ENCODE measurements at regions of chr21 and their contacts with region 1.

Region 1: GRCh38 chr21:45130324-45130774 is 56.0 kb downstream of the ADARB1 start:
- DNase-seq: no peak
- H3K4me3 Mint-ChIP-seq: no peak overlapping the region
- H3K27ac Mint-ChIP-seq: no peak overlapping the region
- H3K4me1 Mint-ChIP-seq: peaks cover 23% of the 10 kb centered on the region
- H3K27me3 Mint-ChIP-seq: no peaks in the 10 kb centered on the region

Region 2: DNA sequence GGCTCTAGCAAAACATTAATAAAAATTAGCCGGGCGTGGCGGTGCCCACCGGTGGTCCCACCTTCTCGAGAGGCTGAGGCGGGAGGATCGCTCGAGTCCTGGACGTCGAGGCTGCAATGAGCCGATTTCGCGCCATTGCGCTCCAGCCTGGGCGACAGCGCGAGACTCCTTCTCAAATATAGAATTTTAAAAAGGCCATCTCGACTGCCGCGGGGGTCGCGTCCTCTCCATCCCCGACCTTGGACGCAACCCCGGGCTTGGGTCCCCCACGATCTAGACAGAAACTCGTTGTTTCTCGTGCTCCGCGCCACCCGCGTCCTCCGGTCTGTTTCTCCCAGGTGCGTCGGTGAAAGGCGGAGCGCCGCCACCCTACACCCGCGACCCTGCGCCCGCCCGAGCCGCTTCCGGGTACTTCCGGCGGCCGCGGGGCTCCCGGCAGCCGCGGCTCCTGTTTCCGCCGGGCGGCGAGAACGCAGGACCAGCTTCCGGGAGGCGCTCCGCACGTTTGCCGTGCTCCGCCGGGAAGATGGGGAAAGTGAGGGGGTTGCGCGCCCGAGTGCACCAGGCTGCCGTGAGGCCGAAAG is 190.7 kb before region 1 on chr21 and contains the start of gene SLX9:
- CTCF ChIA-PET with region 1: interaction called, 256 read pairs
- POLR2A ChIA-PET with region 1: no interaction called
- intact Hi-C with region 1: no loop called
- DNase-seq: peak; percentile 88
- H3K4me3 Mint-ChIP-seq: peak within 1 kb of the TSS; percentile 82
- H3K27ac Mint-ChIP-seq: peak within 1 kb of the TSS; percentile 79
- H3K4me1 Mint-ChIP-seq: peaks cover 36% of the 10 kb centered on the region
- H3K27me3 Mint-ChIP-seq: no peaks in the 10 kb centered on the region
- total RNA-seq, gene SLX9: 60.7 to 64.6 TPM

Region 3: DNA sequence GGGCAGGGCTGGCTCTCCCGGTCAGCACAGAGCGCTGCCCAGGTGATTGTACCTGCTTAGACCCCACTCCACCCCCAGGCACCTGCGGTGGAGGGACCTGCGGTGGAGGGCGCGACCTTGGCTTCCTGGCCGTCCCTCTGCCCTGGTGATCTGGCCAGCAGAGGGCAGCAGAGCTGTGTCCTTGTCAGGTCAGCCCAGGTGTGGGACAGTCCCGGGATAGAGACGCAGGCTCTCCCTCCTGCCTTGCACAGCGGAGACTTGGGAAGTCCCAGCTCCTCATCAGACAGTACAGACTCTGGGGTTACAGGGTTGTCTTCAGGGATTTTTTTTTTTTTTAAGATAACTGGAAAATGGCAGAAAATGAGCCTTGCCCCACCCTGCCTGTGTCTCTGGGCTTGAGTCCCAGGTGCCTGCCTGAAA is 180.6 kb before region 1 on chr21:
- CTCF ChIA-PET with region 1: interaction called, 256 read pairs
- POLR2A ChIA-PET with region 1: no interaction called
- intact Hi-C with region 1: loop called (anchors 1 kb)
- DNase-seq: peak; percentile 87
- H3K4me3 Mint-ChIP-seq: no peak overlapping the region
- H3K27ac Mint-ChIP-seq: no peak overlapping the region
- H3K4me1 Mint-ChIP-seq: peaks cover 6% of the 10 kb centered on the region
- H3K27me3 Mint-ChIP-seq: no peaks in the 10 kb centered on the region

Region 4: DNA sequence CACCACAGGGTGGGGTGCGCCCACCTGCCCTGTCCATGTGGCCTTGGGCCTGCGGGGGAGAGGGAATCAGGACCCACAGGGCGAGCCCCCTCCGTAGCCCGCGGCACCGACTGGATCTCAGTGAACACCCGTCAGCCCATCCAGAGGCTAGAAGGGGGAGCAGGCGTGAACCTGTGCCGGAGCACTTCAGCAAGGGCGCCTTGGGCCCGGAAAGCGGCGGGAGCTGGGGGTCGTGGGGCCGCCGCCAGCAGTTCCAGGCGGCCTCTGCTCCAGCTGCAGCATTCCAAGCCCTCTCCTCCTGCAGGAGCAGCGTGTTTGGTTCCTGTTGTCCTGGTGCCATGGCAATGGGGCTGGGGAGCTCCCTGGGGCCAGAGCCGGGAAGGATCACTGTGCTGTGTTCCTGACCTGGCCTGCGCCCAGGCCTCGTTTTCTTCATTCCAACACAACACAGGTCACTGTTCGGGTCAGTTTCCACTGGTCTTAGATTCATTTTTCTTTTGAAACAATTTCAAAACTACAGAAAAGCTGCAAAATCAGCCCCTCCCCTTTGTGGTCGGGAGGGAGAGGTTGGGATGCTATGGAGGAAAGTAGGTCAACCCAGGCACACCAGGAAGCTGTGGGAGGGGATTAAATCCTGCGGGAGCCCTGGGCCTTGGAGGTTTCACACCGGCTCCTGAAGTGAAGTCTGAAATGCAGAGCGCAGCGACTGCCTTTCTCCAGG is 171.7 kb before region 1 on chr21:
- CTCF ChIA-PET with region 1: interaction called, 256 read pairs
- POLR2A ChIA-PET with region 1: no interaction called
- intact Hi-C with region 1: no loop called
- DNase-seq: no peak
- H3K4me3 Mint-ChIP-seq: no peak overlapping the region
- H3K27ac Mint-ChIP-seq: no peak overlapping the region
- H3K4me1 Mint-ChIP-seq: no peaks in the 10 kb centered on the region
- H3K27me3 Mint-ChIP-seq: no peaks in the 10 kb centered on the region

Region 5: GRCh38 chr21:45074048-45074817 is 56.1 kb before region 1 on chr21 and contains the start of gene ADARB1:
- CTCF ChIA-PET with region 1: interaction called, 73 read pairs
- POLR2A ChIA-PET with region 1: no interaction called
- intact Hi-C with region 1: loop called (anchors 5 kb)
- DNase-seq: peak; percentile 64
- H3K4me3 Mint-ChIP-seq: peak within 1 kb of the TSS; percentile 84
- H3K27ac Mint-ChIP-seq: peak within 1 kb of the TSS; percentile 75
- H3K4me1 Mint-ChIP-seq: peaks cover 43% of the 10 kb centered on the region
- H3K27me3 Mint-ChIP-seq: no peaks in the 10 kb centered on the region
- total RNA-seq, gene ADARB1: 37.6 to 40.6 TPM

Region 6: DNA sequence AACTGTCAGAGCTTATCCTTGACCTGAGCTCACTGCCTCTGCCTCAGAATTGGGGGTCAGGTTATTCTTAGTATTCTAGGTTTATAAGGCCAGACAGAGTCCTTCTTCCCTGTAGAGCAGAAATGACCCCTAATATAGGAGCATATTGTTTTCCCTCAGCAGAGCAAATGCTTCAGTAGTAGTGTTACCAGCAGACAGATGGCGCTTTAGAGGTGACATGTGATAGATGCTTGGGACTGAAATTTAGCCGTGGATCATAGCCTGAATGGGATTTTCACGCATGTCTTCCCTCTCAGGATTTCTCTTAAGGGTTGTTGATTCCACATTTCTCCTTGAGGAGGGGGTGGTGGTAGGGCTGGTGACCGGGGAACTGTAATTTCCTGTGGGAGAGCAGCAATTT is 31.5 kb before region 1 on chr21:
- CTCF ChIA-PET with region 1: interaction called, 40 read pairs
- POLR2A ChIA-PET with region 1: no interaction called
- intact Hi-C with region 1: no loop called
- DNase-seq: no peak
- H3K4me3 Mint-ChIP-seq: no peak overlapping the region
- H3K27ac Mint-ChIP-seq: no peak overlapping the region
- H3K4me1 Mint-ChIP-seq: peaks cover 21% of the 10 kb centered on the region
- H3K27me3 Mint-ChIP-seq: no peaks in the 10 kb centered on the region

Region 7: GRCh38 chr21:45109831-45110492 is 20.4 kb before region 1 on chr21:
- CTCF ChIA-PET with region 1: interaction called, 35 read pairs
- POLR2A ChIA-PET with region 1: no interaction called
- intact Hi-C with region 1: no loop called
- DNase-seq: peak; percentile 63
- H3K4me3 Mint-ChIP-seq: peak overlapping the region; percentile 61
- H3K27ac Mint-ChIP-seq: peak overlapping the region; percentile 25
- H3K4me1 Mint-ChIP-seq: peaks cover 61% of the 10 kb centered on the region
- H3K27me3 Mint-ChIP-seq: no peaks in the 10 kb centered on the region